Common myeloid progenitor, CD34-positive (primary cell): ENCODE measurements at regions of chr17 and their contacts with region 1.

Region 1: GRCh38 chr17:70080541-70081347 is 5.7 kb downstream of the KCNJ16 start:
- DNase-seq: no peak
- H3K4me3 ChIP-seq: no peak overlapping the region
- H3K27ac ChIP-seq: no peak overlapping the region
- H3K4me1 ChIP-seq: no peaks in the 10 kb centered on the region
- H3K27me3 ChIP-seq: no peaks in the 10 kb centered on the region

Region 2: GRCh38 chr17:69961501-69962145 is 119.1 kb before region 1 on chr17:
- CTCF ChIA-PET with region 1: no interaction called
- POLR2A ChIA-PET with region 1: no interaction called
- DNase-seq: no peak
- H3K4me3 ChIP-seq: no peak overlapping the region
- H3K27ac ChIP-seq: no peak overlapping the region
- H3K4me1 ChIP-seq: no peaks in the 10 kb centered on the region
- H3K27me3 ChIP-seq: no peaks in the 10 kb centered on the region

Region 3: GRCh38 chr17:70067134-70067533 is 13.6 kb before region 1 on chr17:
- CTCF ChIA-PET with region 1: interaction called, 3 read pairs
- POLR2A ChIA-PET with region 1: interaction called, 10 read pairs
- DNase-seq: no peak
- H3K4me3 ChIP-seq: no peak overlapping the region
- H3K27ac ChIP-seq: no peak overlapping the region
- H3K4me1 ChIP-seq: peaks cover 0 to 17% (median 0%) of the 10 kb centered on the region in 4 experiments
- H3K27me3 ChIP-seq: no peaks in the 10 kb centered on the region

Region 4: GRCh38 chr17:70521821-70522256 is 441.1 kb after region 1 on chr17:
- CTCF ChIA-PET with region 1: no interaction called
- POLR2A ChIA-PET with region 1: no interaction called
- DNase-seq: peak; percentile 22 to 51 (median 36)
- H3K4me3 ChIP-seq: peak overlapping the region in 1 of 7 experiments; percentile 34
- H3K27ac ChIP-seq: no peak overlapping the region
- H3K4me1 ChIP-seq: peaks cover 2 to 21% (median 4%) of the 10 kb centered on the region in 4 experiments
- H3K27me3 ChIP-seq: no peaks in the 10 kb centered on the region